ENCODE measurements at regions of chr1 and their contacts with region 1.

Region 1: DNA sequence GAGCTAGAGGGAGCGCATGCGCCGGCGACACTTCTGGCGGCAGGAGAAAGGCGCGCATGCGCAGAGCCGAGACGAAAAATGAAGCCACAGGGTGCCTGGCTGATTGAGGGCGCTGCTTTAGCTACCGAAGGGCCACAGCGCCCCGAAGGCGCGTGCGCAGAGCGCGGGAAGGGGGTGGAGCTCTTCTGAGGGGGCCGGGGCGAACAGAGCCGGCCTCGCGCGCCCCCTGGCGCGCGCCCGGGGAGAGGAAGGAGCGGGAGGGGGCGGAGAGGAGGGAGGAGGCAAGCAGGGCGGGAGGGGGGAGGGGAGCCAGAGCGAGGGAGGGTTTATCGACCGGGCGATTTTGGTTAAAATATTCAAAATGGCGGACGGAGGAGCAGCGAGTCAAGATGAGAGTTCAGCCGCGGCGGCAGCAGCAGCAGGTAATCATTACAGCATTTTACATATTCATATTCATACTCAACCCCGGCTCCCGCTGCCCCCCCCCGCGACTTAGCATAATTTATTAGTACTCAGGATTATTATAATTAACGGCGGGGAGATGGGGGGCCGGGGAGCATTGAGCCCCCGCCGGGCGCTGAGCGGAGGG is at the start of gene POU2F1:
- DNase-seq: peak; percentile 92
- ATAC-seq: peak; percentile 90
- H3K4me3 ChIP-seq: peak within 1 kb of the TSS; percentile 95 to 99
- H3K27ac ChIP-seq: peak within 1 kb of the TSS; percentile 95
- H3K4me1 ChIP-seq: peaks cover 23% of the 10 kb centered on the region
- H3K27me3 ChIP-seq: no peaks in the 10 kb centered on the region
- CTCF ChIP-seq: peak; percentile 93
- total RNA-seq, gene POU2F1: 17.1 TPM

Region 2: GRCh38 chr1:166848193-166848592 is 372.4 kb before region 1 on chr1:
- CTCF ChIA-PET with region 1: no interaction called
- POLR2A ChIA-PET with region 1: interaction called, 10 read pairs
- in situ Hi-C with region 1: no loop called
- intact Hi-C with region 1: no loop called
- DNase-seq: no peak
- ATAC-seq: no peak
- H3K4me3 ChIP-seq: no peak overlapping the region
- H3K27ac ChIP-seq: no peak overlapping the region
- H3K4me1 ChIP-seq: no peaks in the 10 kb centered on the region
- H3K27me3 ChIP-seq: no peaks in the 10 kb centered on the region
- CTCF ChIP-seq: no peak

Region 3: DNA sequence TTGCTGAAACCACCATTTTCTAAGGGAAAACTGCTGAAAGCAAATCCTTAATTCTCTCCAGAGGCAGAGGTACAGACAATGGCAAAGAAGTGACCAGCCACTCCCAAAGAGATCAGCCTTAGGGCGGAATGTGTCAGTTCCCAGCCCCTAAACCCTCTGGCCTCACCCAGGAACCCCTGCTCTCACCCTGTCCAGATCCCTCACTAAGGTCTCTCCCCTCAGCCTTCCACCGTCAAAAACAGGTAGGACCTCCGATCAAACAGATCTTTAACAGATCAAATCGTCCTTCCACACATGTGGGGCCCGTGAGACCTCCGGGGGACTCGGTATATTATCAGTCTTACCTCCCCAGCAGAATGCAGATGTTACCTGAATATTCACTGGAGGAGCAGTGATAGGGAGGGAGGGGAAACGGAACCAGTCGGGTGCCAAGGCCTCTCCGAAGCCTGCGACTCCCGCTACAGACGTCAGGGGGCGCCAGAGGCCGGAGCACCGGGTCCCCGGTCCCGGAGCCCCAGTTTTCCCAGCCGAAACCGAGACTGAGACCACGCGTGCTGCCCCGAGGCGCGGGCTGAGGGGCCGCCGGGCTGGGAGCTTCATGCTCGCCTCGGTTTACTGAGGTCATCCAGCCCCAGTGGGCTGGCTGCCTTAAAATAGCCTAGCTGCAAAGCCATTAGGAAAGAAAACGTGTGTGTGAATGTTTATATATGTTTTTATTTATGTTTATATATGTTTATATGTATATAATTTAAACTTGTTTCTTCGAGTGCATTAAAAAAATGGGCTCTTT is 154.1 kb before region 1 on chr1:
- CTCF ChIA-PET with region 1: interaction called, 14 read pairs
- POLR2A ChIA-PET with region 1: no interaction called
- in situ Hi-C with region 1: no loop called
- intact Hi-C with region 1: loop called (anchors 5 kb)
- DNase-seq: no peak
- ATAC-seq: peak; percentile 96
- H3K4me3 ChIP-seq: peak overlapping the region; percentile 19 to 42; a peak in 3 of 4 replicates
- H3K27ac ChIP-seq: no peak overlapping the region
- H3K4me1 ChIP-seq: no peaks in the 10 kb centered on the region
- H3K27me3 ChIP-seq: no peaks in the 10 kb centered on the region; the same call in 1 of the 2 replicates
- CTCF ChIP-seq: peak; percentile 98

Region 4: DNA sequence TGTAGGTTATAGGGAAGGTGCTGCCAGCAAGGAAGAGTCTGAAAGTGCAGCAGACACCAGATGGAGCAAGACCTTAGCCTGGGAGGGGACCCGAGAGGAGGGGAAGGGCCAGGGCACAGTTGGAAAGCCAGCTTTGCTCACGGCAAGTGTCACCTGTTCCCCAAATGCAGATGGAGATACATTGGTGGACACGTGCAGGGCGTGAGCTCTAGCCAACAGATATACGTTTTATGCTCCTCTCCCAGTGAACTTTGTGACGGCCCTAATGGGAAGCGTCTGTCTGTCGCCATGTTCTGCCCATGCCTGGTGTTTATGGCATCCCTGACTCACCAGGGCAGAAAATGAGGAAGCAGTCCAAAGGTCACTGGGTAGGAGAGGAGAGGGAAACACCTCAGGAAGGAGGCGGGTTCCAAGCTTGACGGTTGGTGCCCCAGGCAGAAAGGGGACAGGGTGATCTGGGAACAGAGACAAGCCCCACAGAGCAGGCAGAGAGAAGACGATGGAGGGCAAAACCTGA is 138.1 kb before region 1 on chr1:
- CTCF ChIA-PET with region 1: no interaction called
- POLR2A ChIA-PET with region 1: interaction called, 10 read pairs
- in situ Hi-C with region 1: no loop called
- intact Hi-C with region 1: no loop called
- DNase-seq: no peak
- ATAC-seq: peak; percentile 71
- H3K4me3 ChIP-seq: no peak overlapping the region
- H3K27ac ChIP-seq: no peak overlapping the region
- H3K4me1 ChIP-seq: no peaks in the 10 kb centered on the region; the same call in 1 of the 2 replicates
- H3K27me3 ChIP-seq: peaks cover 8% of the 10 kb centered on the region; the same call in 1 of the 2 replicates
- CTCF ChIP-seq: no peak

Region 5: GRCh38 chr1:167184081-167184480 is 36.5 kb before region 1 on chr1:
- CTCF ChIA-PET with region 1: interaction called, 10 read pairs
- POLR2A ChIA-PET with region 1: no interaction called
- in situ Hi-C with region 1: no loop called
- intact Hi-C with region 1: no loop called
- DNase-seq: no peak
- ATAC-seq: no peak
- H3K4me3 ChIP-seq: no peak overlapping the region
- H3K27ac ChIP-seq: no peak overlapping the region
- H3K4me1 ChIP-seq: no peaks in the 10 kb centered on the region
- H3K27me3 ChIP-seq: no peaks in the 10 kb centered on the region
- CTCF ChIP-seq: no peak

Region 6: GRCh38 chr1:167207940-167208623 is 12.5 kb before region 1 on chr1:
- CTCF ChIA-PET with region 1: interaction called, 9 read pairs
- POLR2A ChIA-PET with region 1: interaction called, 15 read pairs
- in situ Hi-C with region 1: no loop called
- intact Hi-C with region 1: no loop called
- DNase-seq: no peak
- ATAC-seq: no peak
- H3K4me3 ChIP-seq: no peak overlapping the region
- H3K27ac ChIP-seq: no peak overlapping the region
- H3K4me1 ChIP-seq: no peaks in the 10 kb centered on the region
- H3K27me3 ChIP-seq: no peaks in the 10 kb centered on the region
- CTCF ChIP-seq: peak; percentile 22; the same call in 1 of the 2 replicates

Region 7: DNA sequence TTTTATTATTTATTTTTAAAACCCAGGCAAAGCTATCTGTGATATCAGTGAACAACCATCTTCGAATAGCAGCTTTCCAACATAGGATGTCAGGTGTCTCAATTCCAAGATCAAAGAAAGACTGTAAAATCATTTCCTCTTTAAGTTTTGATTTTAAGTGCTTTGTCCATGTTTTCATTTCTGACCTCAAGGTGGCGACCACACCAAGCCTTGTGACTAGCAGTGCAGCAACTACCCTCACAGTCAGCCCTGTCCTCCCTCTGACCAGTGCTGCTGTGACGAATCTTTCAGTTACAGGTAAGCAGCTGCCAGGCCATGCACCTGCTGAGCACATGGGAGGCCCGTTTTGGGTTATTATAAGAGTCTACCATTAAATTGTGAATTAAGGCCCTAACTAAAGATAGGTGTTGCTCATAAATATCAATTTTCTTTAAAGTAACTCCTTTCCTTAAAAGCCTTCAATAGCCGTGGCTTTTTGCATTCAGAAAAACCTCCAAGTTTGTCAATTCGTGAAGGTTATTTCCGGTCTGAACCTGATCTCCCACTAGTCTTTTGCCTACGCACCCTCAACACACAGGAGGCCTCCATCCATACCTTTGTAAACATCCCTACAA is 180.7 kb after region 1 on chr1:
- CTCF ChIA-PET with region 1: interaction called, 10 read pairs
- POLR2A ChIA-PET with region 1: no interaction called
- in situ Hi-C with region 1: no loop called
- intact Hi-C with region 1: no loop called
- DNase-seq: peak; percentile 15
- ATAC-seq: peak; percentile 88
- H3K4me3 ChIP-seq: no peak overlapping the region
- H3K27ac ChIP-seq: no peak overlapping the region
- H3K4me1 ChIP-seq: no peaks in the 10 kb centered on the region
- H3K27me3 ChIP-seq: no peaks in the 10 kb centered on the region
- CTCF ChIP-seq: peak; percentile 82

Region 8: GRCh38 chr1:168266644-168267186 is 1046.1 kb after region 1 on chr1:
- CTCF ChIA-PET with region 1: no interaction called
- POLR2A ChIA-PET with region 1: no interaction called
- in situ Hi-C with region 1: no loop called
- intact Hi-C with region 1: no loop called
- DNase-seq: no peak
- ATAC-seq: no peak
- H3K4me3 ChIP-seq: no peak overlapping the region
- H3K27ac ChIP-seq: no peak overlapping the region
- H3K4me1 ChIP-seq: no peaks in the 10 kb centered on the region
- H3K27me3 ChIP-seq: no peaks in the 10 kb centered on the region
- CTCF ChIP-seq: no peak

Measured in Panc1 (cell line).